ENCODE measurements at regions of chr14 and their contacts with region 1.

Region 1: DNA sequence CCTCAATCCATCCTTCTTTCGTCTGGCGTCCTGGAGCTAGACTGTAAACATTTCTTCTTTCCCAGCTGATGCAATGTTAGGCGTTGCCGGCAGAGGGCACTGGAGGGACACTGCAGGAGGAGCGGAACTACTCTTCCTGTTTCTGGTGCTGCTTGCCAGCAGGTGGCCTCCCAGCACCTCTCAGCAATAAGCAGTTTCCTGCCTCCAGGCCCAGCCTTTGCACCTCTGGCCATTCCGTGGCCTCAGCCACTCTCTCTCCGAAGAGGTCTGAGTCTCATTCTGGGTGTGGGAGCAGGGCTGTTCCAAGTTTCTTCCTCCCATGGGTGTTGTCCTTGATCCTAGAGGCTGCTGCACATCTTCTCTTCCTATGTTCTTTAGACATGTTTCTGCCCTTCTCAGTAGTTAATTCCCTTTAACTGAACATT is 7.5 kb upstream of the ASPG start:
- DNase-seq: peak; percentile 81 to 89 (median 87)
- ATAC-seq: peak; percentile 56 to 89 (median 84)
- H3K4me3 ChIP-seq: no peak overlapping the region
- H3K27ac ChIP-seq: no peak overlapping the region
- H3K4me1 ChIP-seq: peaks cover 0 to 15% (median 3%) of the 10 kb centered on the region in 12 donors
- H3K27me3 ChIP-seq: peaks cover 0 to 9% (median 2%) of the 10 kb centered on the region in 9 donors
- CTCF ChIP-seq: peak in 11 of 12 donors; percentile 98 to 100 (median 99)
- POLR2A ChIP-seq: no peak

Region 2: GRCh38 chr14:102351026-102351425 is 1727.0 kb before region 1 on chr14:
- intact Hi-C with region 1: no loop called
- DNase-seq: peak in 4 of 5 donors; percentile 49 to 69 (median 60)
- ATAC-seq: peak; percentile 36 to 94 (median 65)
- H3K4me3 ChIP-seq: peak overlapping the region in 1 of 12 donors; percentile 4
- H3K27ac ChIP-seq: peak overlapping the region; percentile 0 to 77 (median 66)
- H3K4me1 ChIP-seq: peaks cover 0 to 24% (median 11%) of the 10 kb centered on the region in 12 donors
- H3K27me3 ChIP-seq: no peaks in the 10 kb centered on the region
- CTCF ChIP-seq: no peak
- POLR2A ChIP-seq: no peak

Region 3: GRCh38 chr14:104130974-104131651 is 53.1 kb after region 1 on chr14:
- intact Hi-C with region 1: loop called in 9 of 10 experiments (anchors 1 to 5 kb)
- DNase-seq: peak; percentile 66 to 81 (median 70)
- ATAC-seq: peak; percentile 59 to 80 (median 71)
- H3K4me3 ChIP-seq: no peak overlapping the region
- H3K27ac ChIP-seq: no peak overlapping the region
- H3K4me1 ChIP-seq: peaks cover 0 to 13% (median 5%) of the 10 kb centered on the region in 12 donors
- H3K27me3 ChIP-seq: peaks cover 0 to 32% (median 14%) of the 10 kb centered on the region in 9 donors
- CTCF ChIP-seq: peak; percentile 37 to 74 (median 65)
- POLR2A ChIP-seq: no peak

Region 4: GRCh38 chr14:104361101-104361591 is 283.1 kb after region 1 on chr14:
- intact Hi-C with region 1: loop called in 1 of 10 experiments (anchors 10 kb)
- DNase-seq: peak in 2 of 5 donors; percentile 5 to 47
- ATAC-seq: no peak
- H3K4me3 ChIP-seq: no peak overlapping the region
- H3K27ac ChIP-seq: no peak overlapping the region
- H3K4me1 ChIP-seq: peaks cover 0 to 2% (median 0%) of the 10 kb centered on the region in 12 donors
- H3K27me3 ChIP-seq: peaks cover 0 to 5% (median 0%) of the 10 kb centered on the region in 9 donors
- CTCF ChIP-seq: no peak
- POLR2A ChIP-seq: no peak

Region 5: GRCh38 chr14:104554608-104555429 is 476.8 kb after region 1 on chr14:
- intact Hi-C with region 1: loop called in 8 of 10 experiments (anchors 5 kb)
- DNase-seq: peak in 4 of 5 donors; percentile 13 to 49 (median 22)
- ATAC-seq: no peak
- H3K4me3 ChIP-seq: no peak overlapping the region
- H3K27ac ChIP-seq: no peak overlapping the region
- H3K4me1 ChIP-seq: no peaks in the 10 kb centered on the region
- H3K27me3 ChIP-seq: peaks cover 0 to 15% (median 0%) of the 10 kb centered on the region in 9 donors
- CTCF ChIP-seq: no peak
- POLR2A ChIP-seq: no peak

Region 6: GRCh38 chr14:104563742-104564615 is 485.9 kb after region 1 on chr14:
- intact Hi-C with region 1: loop called (anchors 2 to 5 kb)
- DNase-seq: peak; percentile 70 to 86 (median 78)
- ATAC-seq: peak; percentile 44 to 88 (median 80)
- H3K4me3 ChIP-seq: no peak overlapping the region
- H3K27ac ChIP-seq: no peak overlapping the region
- H3K4me1 ChIP-seq: peaks cover 0 to 23% (median 12%) of the 10 kb centered on the region in 12 donors
- H3K27me3 ChIP-seq: peaks cover 0 to 44% (median 4%) of the 10 kb centered on the region in 9 donors
- CTCF ChIP-seq: peak; percentile 67 to 91 (median 86)
- POLR2A ChIP-seq: no peak

Region 7: GRCh38 chr14:104639889-104640548 is 562.0 kb after region 1 on chr14:
- intact Hi-C with region 1: loop called in 9 of 10 experiments (anchors 1 to 10 kb)
- DNase-seq: peak in 4 of 5 donors; percentile 43 to 63 (median 53)
- ATAC-seq: peak; percentile 54 to 89 (median 82)
- H3K4me3 ChIP-seq: no peak overlapping the region
- H3K27ac ChIP-seq: no peak overlapping the region
- H3K4me1 ChIP-seq: peaks cover 0 to 18% (median 0%) of the 10 kb centered on the region in 12 donors
- H3K27me3 ChIP-seq: peaks cover 0 to 27% (median 3%) of the 10 kb centered on the region in 9 donors
- CTCF ChIP-seq: peak; percentile 83 to 95 (median 89)
- POLR2A ChIP-seq: no peak

Measured in heart left ventricle (tissue), 16 donors.